CD8-positive, alpha-beta T cell (primary cell): ENCODE measurements at regions of chr9 and their contacts with region 1.

Region 1: GRCh38 chr9:128067876-128068613 is at the start of gene SLC25A25:
- DNase-seq: peak; percentile 100
- ATAC-seq: peak; percentile 85
- H3K4me3 ChIP-seq: peak within 1 kb of the TSS; percentile 84 to 87
- H3K4me3 Mint-ChIP-seq: no peak within 1 kb of the TSS
- H3K27ac ChIP-seq: peak within 1 kb of the TSS; percentile 60 to 99
- H3K27ac Mint-ChIP-seq: peak within 1 kb of the TSS; percentile 93
- H3K4me1 ChIP-seq: peaks cover 62% of the 10 kb centered on the region
- H3K4me1 Mint-ChIP-seq: peaks cover 60% of the 10 kb centered on the region
- H3K27me3 ChIP-seq: no peaks in the 10 kb centered on the region
- H3K27me3 Mint-ChIP-seq: no peaks in the 10 kb centered on the region
- CTCF ChIP-seq: no peak
- total RNA-seq, gene SLC25A25: 12.1 to 12.2 TPM

Region 2: DNA sequence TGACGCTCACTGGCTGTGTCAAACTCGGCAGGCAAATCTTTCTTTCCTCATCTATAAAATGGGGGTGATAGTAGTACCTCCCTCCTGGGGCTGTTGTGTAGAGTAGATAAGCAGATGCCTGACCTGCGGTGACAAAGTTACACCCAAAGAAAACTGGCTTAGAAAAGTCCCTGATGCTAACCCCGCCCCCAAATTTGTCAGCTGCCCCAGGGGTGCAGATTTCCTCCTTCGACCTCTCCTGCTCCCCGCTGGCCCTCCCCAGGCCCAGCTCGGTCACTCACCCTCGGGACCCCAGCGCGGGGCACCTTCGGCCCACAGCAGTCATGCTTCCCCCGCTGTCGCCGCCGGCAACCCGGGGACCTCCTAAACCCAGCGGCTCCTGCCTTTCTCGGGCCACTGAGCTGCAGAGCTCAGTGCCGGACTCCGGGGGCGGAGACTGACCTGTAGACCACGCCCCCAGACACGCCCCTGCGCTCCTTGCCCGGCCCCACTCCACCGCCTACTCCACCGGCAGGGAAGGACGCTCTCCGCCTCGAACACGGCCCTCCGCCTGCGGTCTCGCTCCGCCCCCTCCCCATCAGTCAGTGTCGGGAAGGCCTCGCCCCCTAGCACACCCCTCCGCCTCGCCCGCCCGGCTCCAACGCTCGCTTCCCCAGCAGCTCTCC is 297.0 kb before region 1 on chr9:
- CTCF ChIA-PET with region 1: no interaction called
- POLR2A ChIA-PET with region 1: no interaction called
- intact Hi-C with region 1: no loop called
- DNase-seq: peak; percentile 81 to 96 (median 93)
- ATAC-seq: peak; percentile 79
- H3K4me3 ChIP-seq: peak overlapping the region; percentile 55 to 65
- H3K4me3 Mint-ChIP-seq: peak overlapping the region; percentile 88
- H3K27ac ChIP-seq: peak overlapping the region; percentile 58 to 83
- H3K27ac Mint-ChIP-seq: peak overlapping the region; percentile 96
- H3K4me1 ChIP-seq: peaks cover 75% of the 10 kb centered on the region
- H3K4me1 Mint-ChIP-seq: peaks cover 73% of the 10 kb centered on the region
- H3K27me3 ChIP-seq: no peaks in the 10 kb centered on the region
- H3K27me3 Mint-ChIP-seq: no peaks in the 10 kb centered on the region
- CTCF ChIP-seq: no peak

Region 3: DNA sequence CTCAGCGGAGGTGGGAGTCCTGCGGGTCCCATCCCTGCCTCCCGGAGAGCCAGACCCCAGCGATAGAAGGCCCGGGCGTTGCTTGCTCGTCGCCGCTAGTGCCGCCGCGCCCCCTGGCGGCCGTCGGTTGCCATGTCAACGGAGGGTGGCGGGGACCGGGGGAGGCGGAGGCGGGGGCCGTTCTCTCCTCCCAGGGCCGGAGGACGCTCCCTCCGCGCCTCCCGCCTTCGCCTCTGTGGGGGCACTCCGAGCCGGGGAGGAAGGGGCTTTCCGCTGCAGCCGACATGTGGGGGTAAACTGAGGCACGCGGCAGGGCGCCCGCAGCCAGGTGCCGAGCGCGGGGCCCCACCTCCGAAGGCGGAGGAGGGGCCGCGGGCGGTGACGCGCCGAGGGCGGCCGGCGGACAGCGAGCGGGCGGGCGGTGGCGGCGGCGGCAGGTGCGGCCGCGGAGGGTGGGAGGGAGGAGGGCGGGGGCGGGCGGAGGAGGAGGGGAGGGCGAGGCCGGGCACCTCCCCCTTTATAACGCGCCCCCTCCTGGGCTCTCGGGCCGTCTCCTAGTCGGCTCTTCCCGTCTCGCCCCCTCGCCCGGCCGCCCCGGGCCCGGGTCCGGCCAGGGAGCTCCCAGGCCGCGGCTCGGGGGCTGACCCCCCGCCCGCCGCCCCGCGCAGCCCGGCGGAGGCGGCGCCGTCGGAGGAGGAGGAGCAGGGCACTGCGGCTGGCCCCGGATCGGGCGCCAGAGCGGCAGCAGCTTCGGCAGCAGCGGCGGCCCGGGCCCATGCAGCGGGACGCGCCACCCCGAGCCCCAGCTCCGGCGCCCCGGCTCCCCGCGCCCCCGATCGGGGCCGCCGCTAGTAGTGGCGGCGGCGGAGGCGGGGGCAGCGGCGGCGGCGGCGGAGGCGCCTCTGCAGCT is 282.8 kb before region 1 on chr9:
- CTCF ChIA-PET with region 1: no interaction called
- POLR2A ChIA-PET with region 1: interaction called, 7 read pairs
- intact Hi-C with region 1: loop called in 1 of 2 experiments (anchors 5 kb)
- DNase-seq: peak; percentile 85 to 97 (median 91)
- ATAC-seq: peak; percentile 53
- H3K4me3 ChIP-seq: peak overlapping the region; percentile 49 to 82
- H3K4me3 Mint-ChIP-seq: peak overlapping the region; percentile 89
- H3K27ac ChIP-seq: peak overlapping the region; percentile 73 to 94
- H3K27ac Mint-ChIP-seq: peak overlapping the region; percentile 96
- H3K4me1 ChIP-seq: peaks cover 66% of the 10 kb centered on the region
- H3K4me1 Mint-ChIP-seq: peaks cover 60% of the 10 kb centered on the region
- H3K27me3 ChIP-seq: no peaks in the 10 kb centered on the region
- H3K27me3 Mint-ChIP-seq: no peaks in the 10 kb centered on the region
- CTCF ChIP-seq: peak; percentile 74

Region 4: GRCh38 chr9:127980706-127981558 is 87.1 kb before region 1 on chr9 and contains the start of gene EEIG1:
- CTCF ChIA-PET with region 1: interaction called, 3 read pairs
- POLR2A ChIA-PET with region 1: interaction called, 4 read pairs
- intact Hi-C with region 1: loop called in 1 of 2 experiments (anchors 1 kb)
- DNase-seq: peak; percentile 95 to 99 (median 97)
- ATAC-seq: peak; percentile 89
- H3K4me3 ChIP-seq: peak within 1 kb of the TSS; percentile 73 to 91
- H3K4me3 Mint-ChIP-seq: peak within 1 kb of the TSS; percentile 97
- H3K27ac ChIP-seq: peak within 1 kb of the TSS; percentile 62 to 78
- H3K27ac Mint-ChIP-seq: peak within 1 kb of the TSS; percentile 98
- H3K4me1 ChIP-seq: peaks cover 36% of the 10 kb centered on the region
- H3K4me1 Mint-ChIP-seq: peaks cover 47% of the 10 kb centered on the region
- H3K27me3 ChIP-seq: no peaks in the 10 kb centered on the region
- H3K27me3 Mint-ChIP-seq: no peaks in the 10 kb centered on the region
- CTCF ChIP-seq: no peak
- total RNA-seq, gene EEIG1: 359 to 378 TPM

Region 5: GRCh38 chr9:128094166-128094967 is 26.3 kb after region 1 on chr9:
- CTCF ChIA-PET with region 1: interaction called, 6 read pairs
- POLR2A ChIA-PET with region 1: interaction called, 24 read pairs
- intact Hi-C with region 1: loop called in 1 of 2 experiments (anchors 1 kb)
- DNase-seq: peak in 7 of 9 experiments; percentile 38 to 82 (median 62)
- ATAC-seq: peak; percentile 60
- H3K4me3 ChIP-seq: no peak overlapping the region
- H3K4me3 Mint-ChIP-seq: peak overlapping the region; percentile 66
- H3K27ac ChIP-seq: peak overlapping the region; percentile 57 to 74
- H3K27ac Mint-ChIP-seq: peak overlapping the region; percentile 93
- H3K4me1 ChIP-seq: peaks cover 75% of the 10 kb centered on the region
- H3K4me1 Mint-ChIP-seq: peaks cover 80% of the 10 kb centered on the region
- H3K27me3 ChIP-seq: no peaks in the 10 kb centered on the region
- H3K27me3 Mint-ChIP-seq: no peaks in the 10 kb centered on the region
- CTCF ChIP-seq: no peak

Region 6: GRCh38 chr9:128159784-128160602 is 91.9 kb after region 1 on chr9 and contains the start of gene BBLN:
- CTCF ChIA-PET with region 1: no interaction called
- POLR2A ChIA-PET with region 1: interaction called, 7 read pairs
- intact Hi-C with region 1: loop called in 1 of 2 experiments (anchors 1 kb)
- DNase-seq: peak; percentile 87 to 95 (median 93)
- ATAC-seq: peak; percentile 87
- H3K4me3 ChIP-seq: peak within 1 kb of the TSS; percentile 90 to 94
- H3K4me3 Mint-ChIP-seq: peak within 1 kb of the TSS; percentile 79
- H3K27ac ChIP-seq: peak within 1 kb of the TSS; percentile 70 to 86
- H3K27ac Mint-ChIP-seq: peak within 1 kb of the TSS; percentile 90
- H3K4me1 ChIP-seq: peaks cover 19% of the 10 kb centered on the region
- H3K4me1 Mint-ChIP-seq: peaks cover 17% of the 10 kb centered on the region
- H3K27me3 ChIP-seq: no peaks in the 10 kb centered on the region
- H3K27me3 Mint-ChIP-seq: no peaks in the 10 kb centered on the region
- CTCF ChIP-seq: no peak
- total RNA-seq, gene BBLN: 56.6 to 67.4 TPM

Region 7: GRCh38 chr9:128322404-128323211 is 254.6 kb after region 1 on chr9 and contains the starts of genes COQ4 and TRUB2:
- CTCF ChIA-PET with region 1: no interaction called
- POLR2A ChIA-PET with region 1: no interaction called
- intact Hi-C with region 1: no loop called
- DNase-seq: peak; percentile 83 to 97 (median 92)
- ATAC-seq: peak; percentile 86
- H3K4me3 ChIP-seq: peak within 1 kb of the TSS; percentile 88 to 89
- H3K4me3 Mint-ChIP-seq: peak within 1 kb of the TSS; percentile 95
- H3K27ac ChIP-seq: peak within 1 kb of the TSS; percentile 80 to 89
- H3K27ac Mint-ChIP-seq: peak within 1 kb of the TSS; percentile 96
- H3K4me1 ChIP-seq: peaks cover 17% of the 10 kb centered on the region
- H3K4me1 Mint-ChIP-seq: peaks cover 30% of the 10 kb centered on the region
- H3K27me3 ChIP-seq: no peaks in the 10 kb centered on the region
- H3K27me3 Mint-ChIP-seq: no peaks in the 10 kb centered on the region
- CTCF ChIP-seq: no peak
- total RNA-seq, gene COQ4: 18.2 to 20.1 TPM
- total RNA-seq, gene TRUB2: 9.8 to 12.9 TPM